ENCODE measurements at regions of chr10 and their contacts with region 1.

Region 1: GRCh38 chr10:101745074-101745696 is 30.7 kb downstream of the FGF8 start:
- DNase-seq: no peak
- H3K4me3 ChIP-seq: no peak overlapping the region
- H3K27ac ChIP-seq: no peak overlapping the region
- H3K4me1 ChIP-seq: no peaks in the 10 kb centered on the region
- H3K27me3 ChIP-seq: no peaks in the 10 kb centered on the region
- CTCF ChIP-seq: no peak

Region 2: DNA sequence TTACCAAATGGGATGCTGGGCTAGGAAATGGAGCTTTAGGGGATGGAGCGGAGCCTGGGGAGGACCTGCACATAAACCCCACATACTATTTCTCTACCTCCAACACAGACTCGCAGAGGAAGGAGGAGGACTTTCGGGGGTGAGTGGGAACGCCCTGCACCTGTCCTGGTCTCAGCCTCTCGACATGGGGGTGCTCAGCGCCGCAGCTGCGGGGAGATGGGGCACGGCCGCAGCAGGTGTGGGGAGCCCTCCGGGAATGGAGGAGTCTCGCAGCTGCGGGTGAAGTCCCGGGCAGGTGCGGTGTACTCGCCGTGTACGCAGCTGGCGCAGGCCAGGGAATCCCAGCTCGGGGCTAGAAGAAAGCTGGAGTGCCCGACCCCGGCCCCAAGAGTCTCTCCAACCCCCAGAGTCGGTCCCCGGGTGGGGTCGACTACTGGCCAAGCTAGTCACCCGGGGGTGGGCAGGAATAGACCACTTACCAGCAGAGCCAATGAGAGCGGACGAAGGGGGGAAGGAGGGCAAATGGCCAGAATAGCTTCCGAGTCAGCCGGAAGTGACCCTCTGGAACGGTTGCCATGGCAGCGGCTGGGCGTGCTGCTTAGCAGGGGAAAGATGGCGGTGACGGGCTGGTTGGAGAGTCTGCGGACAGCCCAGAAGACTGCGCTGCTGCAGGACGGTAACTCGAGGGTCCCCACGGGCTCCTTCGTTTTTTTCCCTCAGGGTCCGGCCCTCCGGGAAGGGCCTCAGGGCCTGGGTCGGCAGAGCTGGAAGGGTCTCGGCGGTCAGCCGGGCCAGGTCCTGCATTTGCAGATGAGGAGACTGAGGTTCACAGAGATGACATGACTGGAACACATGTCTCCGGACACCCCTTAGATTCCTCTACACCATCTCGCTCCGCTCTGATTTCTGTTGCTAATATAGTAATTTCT is 157.2 kb before region 1 on chr10 and contains the starts of genes DPCD and POLL:
- CTCF ChIA-PET with region 1: no interaction called
- POLR2A ChIA-PET with region 1: no interaction called
- intact Hi-C with region 1: no loop called
- DNase-seq: peak; percentile 79 to 83
- H3K4me3 ChIP-seq: peak within 1 kb of the TSS; percentile 97
- H3K27ac ChIP-seq: no peak within 1 kb of the TSS
- H3K4me1 ChIP-seq: peaks cover 12% of the 10 kb centered on the region; the same call in 1 of the 2 replicates
- H3K27me3 ChIP-seq: no peaks in the 10 kb centered on the region
- CTCF ChIP-seq: no peak
- total RNA-seq, gene DPCD: 20.3 and 21.5 TPM in 2 replicates
- total RNA-seq, gene POLL: 30.3 and 31.5 TPM in 2 replicates

Region 3: GRCh38 chr10:101769541-101770180 is 24.5 kb after region 1 on chr10:
- CTCF ChIA-PET with region 1: interaction called, 10 read pairs
- POLR2A ChIA-PET with region 1: no interaction called
- intact Hi-C with region 1: no loop called
- DNase-seq: no peak
- H3K4me3 ChIP-seq: no peak overlapping the region
- H3K27ac ChIP-seq: no peak overlapping the region
- H3K4me1 ChIP-seq: no peaks in the 10 kb centered on the region
- H3K27me3 ChIP-seq: no peaks in the 10 kb centered on the region
- CTCF ChIP-seq: no peak

Region 4: DNA sequence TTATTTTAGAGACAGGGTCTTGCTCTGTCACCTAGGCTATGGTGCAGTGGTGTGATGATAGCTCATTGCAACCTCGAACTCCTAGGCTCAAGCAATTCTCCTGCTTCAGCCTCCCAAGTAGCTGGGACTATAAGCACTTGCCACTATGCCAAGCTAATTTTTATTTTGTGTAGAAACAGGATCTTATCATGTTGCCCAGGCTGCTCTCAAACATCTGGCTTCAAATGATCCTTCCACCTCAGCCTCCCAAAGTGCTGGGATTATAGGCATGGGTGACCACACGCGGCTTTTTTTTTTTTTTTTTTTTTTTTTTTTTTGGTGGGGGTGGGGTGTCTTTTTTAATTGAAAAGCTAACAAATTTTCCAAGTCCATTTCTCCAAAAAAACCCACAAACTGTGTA is 338.4 kb after region 1 on chr10:
- CTCF ChIA-PET with region 1: no interaction called
- POLR2A ChIA-PET with region 1: interaction called, 11 read pairs
- intact Hi-C with region 1: no loop called
- DNase-seq: no peak
- H3K4me3 ChIP-seq: no peak overlapping the region
- H3K27ac ChIP-seq: no peak overlapping the region
- H3K4me1 ChIP-seq: no peaks in the 10 kb centered on the region
- H3K27me3 ChIP-seq: 0 out of 2 replicates have a peak, but pooled peaks cover under 1% of the 10 kb centered on the region
- CTCF ChIP-seq: no peak